ENCODE measurements at regions of chr12 and their contacts with region 1.

Region 1: GRCh38 chr12:49974231-49974675 is 1.5 kb downstream of the AQP6 start:
- DNase-seq: peak; percentile 84 to 91 (median 90)
- ATAC-seq: peak; percentile 88 to 90
- H3K4me3 ChIP-seq: no peak overlapping the region
- H3K27ac ChIP-seq: no peak overlapping the region
- H3K4me1 ChIP-seq: no peaks in the 10 kb centered on the region
- H3K27me3 ChIP-seq: no peaks in the 10 kb centered on the region

Region 2: GRCh38 chr12:49920241-49920921 is 53.9 kb before region 1 on chr12:
- intact Hi-C with region 1: no loop called
- DNase-seq: peak in 2 of 3 donors; percentile 62 to 77
- ATAC-seq: peak; percentile 19 to 42
- H3K4me3 ChIP-seq: no peak overlapping the region
- H3K27ac ChIP-seq: peak overlapping the region; percentile 0
- H3K4me1 ChIP-seq: peaks cover 2% of the 10 kb centered on the region
- H3K27me3 ChIP-seq: no peaks in the 10 kb centered on the region

Region 3: DNA sequence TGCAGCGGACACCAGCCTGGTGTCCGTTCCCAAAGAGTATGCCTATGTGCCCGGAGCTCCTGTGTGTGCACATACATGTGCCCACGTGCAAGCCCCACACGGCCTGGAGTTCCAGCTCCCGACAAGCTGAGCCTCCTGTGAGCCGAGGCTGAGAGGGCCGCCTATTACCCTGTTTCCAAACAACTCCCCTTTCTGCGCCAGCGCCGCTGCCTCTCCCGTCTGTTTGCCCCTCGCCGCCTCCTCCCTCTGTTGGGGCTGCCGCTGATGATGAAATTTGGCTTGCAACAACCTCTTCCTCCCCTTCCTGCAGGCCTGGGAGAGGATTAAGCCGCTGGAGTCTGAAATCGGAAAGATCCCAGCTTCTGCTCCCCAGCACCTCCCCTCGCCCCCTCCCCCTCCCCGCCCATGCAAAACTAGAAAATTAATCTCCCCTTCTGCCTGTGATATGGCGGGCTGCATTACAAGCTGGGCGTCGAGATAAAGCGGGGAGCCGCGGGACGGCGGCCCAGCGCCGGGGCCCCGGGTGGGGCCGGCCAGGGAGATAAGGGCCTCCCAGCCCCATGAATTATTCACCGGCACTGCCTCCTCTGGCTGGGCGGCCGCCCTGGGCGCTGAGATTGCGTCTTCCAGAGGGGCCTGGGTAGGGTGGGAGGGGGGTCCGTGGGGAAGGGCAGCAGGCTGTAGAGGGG is 76.3 kb after region 1 on chr12:
- intact Hi-C with region 1: loop called in 3 of 4 experiments (anchors 5 kb)
- DNase-seq: peak; percentile 86 to 94 (median 93)
- ATAC-seq: peak; percentile 94
- H3K4me3 ChIP-seq: peak overlapping the region; percentile 34
- H3K27ac ChIP-seq: no peak overlapping the region
- H3K4me1 ChIP-seq: peaks cover 2% of the 10 kb centered on the region
- H3K27me3 ChIP-seq: no peaks in the 10 kb centered on the region

Measured in right cardiac atrium (tissue), 5 donors.